ENCODE measurements at regions of chr10 and their contacts with region 1.

Region 1: DNA sequence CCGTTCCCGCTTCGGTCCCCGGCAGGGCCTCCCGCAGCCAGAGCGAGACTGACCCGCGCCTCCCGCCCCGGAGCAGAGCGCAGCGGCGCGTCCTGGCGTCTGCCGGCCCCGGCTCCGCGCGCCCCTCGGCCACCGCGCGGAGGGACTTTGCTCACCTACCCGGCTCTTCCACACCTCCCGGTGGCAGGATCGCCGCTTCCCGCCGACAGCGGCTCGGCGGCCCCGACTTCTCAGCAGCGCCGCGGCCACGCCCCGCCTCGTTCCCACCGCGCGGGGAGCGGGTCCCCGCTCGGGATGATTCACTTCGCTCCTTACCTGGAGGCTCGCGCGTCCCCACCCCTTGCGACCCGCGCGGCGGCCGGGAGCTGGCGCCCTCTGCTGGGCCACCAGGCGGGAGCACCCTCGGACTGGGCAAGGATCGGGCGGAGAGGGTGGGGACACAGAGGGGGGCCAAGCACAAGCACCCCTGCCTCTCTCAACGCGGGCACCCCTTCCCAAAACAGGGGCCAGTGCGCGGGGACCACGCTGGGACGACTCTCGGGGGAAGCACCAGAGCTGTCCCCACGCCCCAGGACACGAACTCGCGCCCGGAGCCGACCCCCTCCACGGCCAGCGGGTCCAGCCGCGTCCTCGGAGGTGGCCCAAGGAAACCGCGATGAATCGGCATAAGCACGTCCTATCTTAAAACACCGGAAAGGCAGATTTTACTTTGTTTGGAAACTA is 101.0 kb upstream of the SVIL start:
- DNase-seq: peak; percentile 64 to 97
- H3K4me3 ChIP-seq: peak overlapping the region; percentile 73
- H3K27ac ChIP-seq: peak overlapping the region; percentile 93
- H3K4me1 ChIP-seq: peaks cover 22% of the 10 kb centered on the region
- H3K27me3 ChIP-seq: no peaks in the 10 kb centered on the region
- CTCF ChIP-seq: peak; percentile 84

Region 2: DNA sequence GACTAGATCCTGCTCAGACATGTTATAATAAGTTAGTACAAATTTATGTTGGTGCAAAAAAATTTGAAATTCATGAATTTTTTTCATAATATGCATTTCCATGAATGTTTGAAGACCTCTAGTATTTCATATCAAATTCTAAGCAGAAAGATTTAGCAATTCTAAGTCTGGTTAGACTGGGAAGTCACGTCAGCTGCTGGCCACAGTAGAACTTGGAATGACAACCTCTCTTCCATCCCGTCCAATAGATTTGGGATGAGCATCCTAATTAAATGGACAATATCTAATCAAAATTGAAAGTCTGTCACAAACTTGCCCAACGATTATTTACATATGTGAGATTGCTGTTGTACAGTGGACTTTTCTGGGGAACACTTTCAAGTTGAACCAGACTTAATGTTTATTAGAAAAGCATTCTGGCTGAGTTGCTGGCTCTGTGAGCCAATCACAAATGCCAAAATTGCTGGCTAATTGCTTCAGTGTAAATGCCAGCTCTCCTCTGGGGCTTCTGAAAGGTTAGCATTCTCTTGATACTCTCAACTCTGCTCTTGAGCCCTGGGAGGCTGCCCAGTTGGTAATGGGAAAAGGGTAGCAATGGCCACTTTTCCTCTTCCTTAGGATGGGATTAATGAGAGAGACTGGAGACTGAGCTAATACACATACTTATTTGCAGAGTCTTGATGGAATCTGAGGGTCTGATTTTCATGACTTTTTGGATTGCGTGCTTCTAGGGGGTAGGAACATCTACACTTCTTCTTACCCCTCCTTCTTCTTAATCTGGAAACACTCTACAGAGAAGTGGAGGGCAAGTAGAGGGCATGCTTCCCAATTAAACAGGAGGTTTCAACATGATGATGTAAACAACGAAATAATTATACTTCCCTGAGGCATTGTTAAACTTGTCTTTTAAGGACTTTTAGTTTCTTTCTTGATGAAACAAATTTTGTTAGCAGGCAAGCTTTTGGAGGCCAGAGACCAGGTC is 805.0 kb before region 1 on chr10:
- CTCF ChIA-PET with region 1: no interaction called
- POLR2A ChIA-PET with region 1: no interaction called
- intact Hi-C with region 1: no loop called
- DNase-seq: no peak
- H3K4me3 ChIP-seq: no peak overlapping the region
- H3K27ac ChIP-seq: no peak overlapping the region
- H3K4me1 ChIP-seq: no peaks in the 10 kb centered on the region
- H3K27me3 ChIP-seq: no peaks in the 10 kb centered on the region
- CTCF ChIP-seq: no peak

Region 3: GRCh38 chr10:29535012-29535777 is 200.6 kb before region 1 on chr10:
- CTCF ChIA-PET with region 1: interaction called, 10 read pairs
- POLR2A ChIA-PET with region 1: no interaction called
- intact Hi-C with region 1: loop called (anchors 10 kb)
- DNase-seq: peak in 1 of 2 experiments; percentile 69
- H3K4me3 ChIP-seq: no peak overlapping the region
- H3K27ac ChIP-seq: 0 out of 2 replicates have a peak overlapping the region, but pooled peaks have one; percentile 9
- H3K4me1 ChIP-seq: no peaks in the 10 kb centered on the region
- H3K27me3 ChIP-seq: no peaks in the 10 kb centered on the region
- CTCF ChIP-seq: peak; percentile 25; the same call in 1 of the 2 replicates

Region 4: DNA sequence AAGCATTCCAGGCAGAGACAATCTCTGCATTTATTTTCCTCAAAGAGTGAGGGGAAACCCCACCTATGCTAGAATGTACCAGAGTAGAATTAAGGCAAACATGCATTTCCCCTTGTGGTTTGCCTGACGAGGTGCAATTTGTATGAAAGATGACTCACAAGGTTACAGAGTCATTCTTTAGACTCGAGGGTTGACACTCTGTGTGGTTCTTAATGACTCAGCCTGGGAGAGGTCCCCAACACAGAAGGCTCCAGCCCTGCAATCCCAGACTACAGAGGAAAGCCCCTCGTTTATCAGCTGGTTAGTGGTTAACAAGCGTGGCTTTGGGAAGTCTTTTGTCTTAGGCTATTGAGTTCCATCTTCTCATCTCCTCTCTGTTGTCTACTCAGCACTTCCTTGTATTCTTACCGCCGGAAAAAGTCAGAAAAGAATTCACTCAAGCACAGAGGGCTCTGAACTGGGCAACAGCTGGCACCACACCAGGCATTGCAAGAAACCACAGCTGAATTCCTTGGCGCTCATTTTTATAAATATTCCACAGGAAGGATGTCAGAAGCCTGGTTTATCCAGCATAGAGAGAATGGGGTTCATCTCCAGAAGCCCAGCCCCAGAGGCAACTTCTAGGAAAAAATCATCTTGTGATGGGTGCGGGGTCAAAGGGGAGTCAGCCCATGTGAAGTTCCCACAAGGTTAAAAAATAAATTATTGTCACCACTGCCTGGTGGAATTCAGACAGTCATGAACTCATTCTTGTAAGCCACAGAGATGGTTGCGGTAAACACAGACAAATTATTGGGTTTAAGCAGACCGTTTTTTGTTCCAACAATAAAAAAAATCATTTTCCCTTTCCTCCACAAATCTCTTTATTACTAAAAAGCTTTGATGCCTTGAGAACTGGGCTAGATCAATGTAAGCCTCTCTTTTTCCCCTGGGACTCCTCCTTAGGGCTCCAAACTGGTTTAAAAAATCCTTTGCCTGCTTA is 76.5 kb before region 1 on chr10:
- CTCF ChIA-PET with region 1: no interaction called
- POLR2A ChIA-PET with region 1: no interaction called
- intact Hi-C with region 1: loop called (anchors 2 kb)
- DNase-seq: peak; percentile 87 to 97
- H3K4me3 ChIP-seq: no peak overlapping the region
- H3K27ac ChIP-seq: peak overlapping the region; percentile 76
- H3K4me1 ChIP-seq: peaks cover 51% of the 10 kb centered on the region
- H3K27me3 ChIP-seq: no peaks in the 10 kb centered on the region
- CTCF ChIP-seq: peak; percentile 45; the same call in 1 of the 2 replicates

Region 5: GRCh38 chr10:29757551-29758297 is 22.0 kb after region 1 on chr10:
- CTCF ChIA-PET with region 1: no interaction called
- POLR2A ChIA-PET with region 1: no interaction called
- intact Hi-C with region 1: no loop called
- DNase-seq: peak; percentile 75 to 90
- H3K4me3 ChIP-seq: no peak overlapping the region; the same call in 1 of the 2 replicates
- H3K27ac ChIP-seq: peak overlapping the region; percentile 86
- H3K4me1 ChIP-seq: peaks cover 24% of the 10 kb centered on the region
- H3K27me3 ChIP-seq: no peaks in the 10 kb centered on the region
- CTCF ChIP-seq: no peak

Region 6: GRCh38 chr10:29784175-29784773 is 48.5 kb after region 1 on chr10:
- CTCF ChIA-PET with region 1: no interaction called
- POLR2A ChIA-PET with region 1: no interaction called
- intact Hi-C with region 1: loop called (anchors 1 kb)
- DNase-seq: peak; percentile 76 to 95
- H3K4me3 ChIP-seq: no peak overlapping the region
- H3K27ac ChIP-seq: peak overlapping the region; percentile 86
- H3K4me1 ChIP-seq: peaks cover 30% of the 10 kb centered on the region
- H3K27me3 ChIP-seq: no peaks in the 10 kb centered on the region
- CTCF ChIP-seq: no peak

Region 7: DNA sequence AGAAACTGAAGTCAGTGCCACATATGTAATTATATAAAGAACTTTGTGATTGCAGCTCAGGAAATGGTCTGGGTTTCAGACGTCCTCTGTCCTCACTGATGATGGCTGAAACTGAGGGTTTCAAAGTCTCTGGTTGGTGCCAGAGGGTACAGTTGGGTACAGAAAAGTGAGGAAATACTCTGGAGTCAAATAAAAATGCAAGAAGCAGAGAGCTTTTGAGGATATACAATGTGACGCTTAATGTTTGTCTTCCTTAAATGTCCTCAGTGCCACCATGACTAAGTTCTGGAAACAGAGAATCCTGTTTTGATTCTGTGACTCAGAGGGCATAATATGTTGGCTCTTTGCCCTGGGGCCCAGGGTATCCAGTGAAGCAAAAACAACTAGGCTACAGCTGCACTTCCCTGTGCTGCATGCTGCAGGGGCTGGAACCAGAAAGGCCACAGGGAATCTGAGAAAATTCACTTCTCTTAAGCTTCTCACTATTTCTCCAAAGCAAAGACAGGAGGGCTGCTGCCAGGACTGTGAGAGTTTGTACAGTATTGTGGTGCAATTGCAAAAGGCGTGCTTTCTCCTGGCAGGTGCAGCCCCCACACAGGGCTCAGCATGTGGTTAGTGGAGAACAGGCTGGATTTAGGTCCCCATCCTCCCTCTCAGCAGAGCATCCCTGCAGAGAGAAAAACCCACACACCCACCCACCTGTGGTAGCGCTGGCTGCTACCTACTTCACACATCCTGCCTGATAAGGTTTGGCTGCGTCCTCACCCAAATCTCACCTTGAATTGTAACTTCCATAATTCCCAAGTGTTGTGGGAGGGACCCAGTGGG is 68.5 kb after region 1 on chr10:
- CTCF ChIA-PET with region 1: interaction called, 3 read pairs
- POLR2A ChIA-PET with region 1: interaction called, 5 read pairs
- intact Hi-C with region 1: loop called (anchors 1 kb)
- DNase-seq: peak; percentile 86 to 96
- H3K4me3 ChIP-seq: peak overlapping the region; percentile 38; the same call in 1 of the 2 replicates
- H3K27ac ChIP-seq: peak overlapping the region; percentile 100
- H3K4me1 ChIP-seq: peaks cover 69% of the 10 kb centered on the region
- H3K27me3 ChIP-seq: no peaks in the 10 kb centered on the region
- CTCF ChIP-seq: no peak

Region 8: DNA sequence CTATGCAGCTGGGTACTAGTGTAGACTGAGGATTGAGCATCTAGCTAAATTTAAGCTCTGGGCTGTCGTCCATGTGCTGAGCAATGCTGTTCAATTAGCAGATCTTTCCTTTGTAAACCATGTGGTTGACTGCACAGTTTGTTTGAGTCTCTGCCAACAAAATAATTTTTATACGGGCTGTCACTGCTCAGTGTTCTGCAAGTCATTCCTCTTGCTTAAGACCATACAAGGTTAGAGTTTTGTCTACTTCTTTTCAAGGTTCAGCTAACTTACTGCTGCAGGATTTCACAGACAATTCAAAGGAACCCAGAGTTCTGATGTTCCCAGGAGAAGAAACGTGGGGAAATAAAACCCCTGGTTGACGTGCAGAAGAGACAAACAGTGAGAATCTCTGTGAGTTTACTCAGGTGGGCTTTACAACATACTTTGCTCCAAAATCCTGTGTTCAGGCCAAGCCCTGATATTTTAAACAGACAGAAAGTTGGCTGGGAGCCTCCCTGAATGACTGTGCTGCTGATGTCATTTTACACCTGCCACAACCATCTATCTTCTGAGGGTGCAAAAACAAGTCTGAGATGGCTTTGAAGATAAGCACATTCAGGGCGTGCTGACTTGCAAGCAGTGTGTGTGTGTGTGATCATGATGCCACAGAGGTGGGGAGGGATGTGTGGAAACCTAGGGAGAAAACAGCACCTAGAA is 76.1 kb after region 1 on chr10:
- CTCF ChIA-PET with region 1: no interaction called
- POLR2A ChIA-PET with region 1: no interaction called
- intact Hi-C with region 1: loop called (anchors 2 kb)
- DNase-seq: peak; percentile 78 to 94
- H3K4me3 ChIP-seq: peak overlapping the region; percentile 33; the same call in 1 of the 2 replicates
- H3K27ac ChIP-seq: peak overlapping the region; percentile 99
- H3K4me1 ChIP-seq: peaks cover 58% of the 10 kb centered on the region
- H3K27me3 ChIP-seq: no peaks in the 10 kb centered on the region
- CTCF ChIP-seq: no peak

Region 9: GRCh38 chr10:29949411-29950011 is 213.8 kb after region 1 on chr10:
- CTCF ChIA-PET with region 1: no interaction called
- POLR2A ChIA-PET with region 1: no interaction called
- intact Hi-C with region 1: loop called (anchors 1 kb)
- DNase-seq: peak; percentile 44 to 96
- H3K4me3 ChIP-seq: no peak overlapping the region
- H3K27ac ChIP-seq: peak overlapping the region; percentile 91
- H3K4me1 ChIP-seq: peaks cover 51% of the 10 kb centered on the region
- H3K27me3 ChIP-seq: no peaks in the 10 kb centered on the region
- CTCF ChIP-seq: no peak

Region 10: DNA sequence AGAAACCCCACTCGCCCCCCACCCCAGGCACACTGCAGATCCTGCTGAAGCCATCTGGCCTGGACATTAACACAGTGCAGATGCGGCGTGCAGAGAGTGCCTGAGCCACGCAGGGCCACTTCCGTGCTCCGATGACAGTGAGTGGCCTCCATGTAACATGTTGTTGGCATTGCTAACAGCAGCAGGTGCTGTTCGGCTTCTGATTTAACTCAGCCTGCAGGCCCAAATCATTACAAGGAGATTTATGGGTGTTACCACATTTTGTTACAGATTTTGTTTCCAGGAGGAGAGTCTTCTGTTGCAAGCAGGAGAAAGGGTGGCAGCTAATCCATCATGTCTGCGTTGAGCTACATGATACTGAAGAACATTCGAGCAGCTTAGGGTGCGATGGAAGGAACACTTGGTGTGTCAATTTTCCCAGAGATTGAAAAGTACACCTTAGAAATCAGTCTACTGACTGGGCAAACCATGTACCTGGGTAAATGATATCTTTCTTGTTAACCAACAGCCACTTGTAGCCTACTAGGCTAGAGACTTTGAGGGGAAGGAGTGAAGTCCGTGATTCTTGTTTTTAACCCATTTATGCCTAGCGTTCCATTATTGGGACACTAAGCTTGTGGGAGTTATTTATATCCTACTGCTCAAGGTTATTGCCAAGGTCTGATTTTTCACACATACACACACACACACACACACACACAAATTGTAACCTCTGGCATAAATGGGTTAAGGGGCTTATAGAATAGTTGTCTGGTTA is 233.7 kb after region 1 on chr10:
- CTCF ChIA-PET with region 1: no interaction called
- POLR2A ChIA-PET with region 1: no interaction called
- intact Hi-C with region 1: no loop called
- DNase-seq: no peak
- H3K4me3 ChIP-seq: no peak overlapping the region
- H3K27ac ChIP-seq: no peak overlapping the region
- H3K4me1 ChIP-seq: no peaks in the 10 kb centered on the region
- H3K27me3 ChIP-seq: no peaks in the 10 kb centered on the region
- CTCF ChIP-seq: no peak